ENCODE measurements at regions of chr10 and their contacts with region 1.

Region 1: DNA sequence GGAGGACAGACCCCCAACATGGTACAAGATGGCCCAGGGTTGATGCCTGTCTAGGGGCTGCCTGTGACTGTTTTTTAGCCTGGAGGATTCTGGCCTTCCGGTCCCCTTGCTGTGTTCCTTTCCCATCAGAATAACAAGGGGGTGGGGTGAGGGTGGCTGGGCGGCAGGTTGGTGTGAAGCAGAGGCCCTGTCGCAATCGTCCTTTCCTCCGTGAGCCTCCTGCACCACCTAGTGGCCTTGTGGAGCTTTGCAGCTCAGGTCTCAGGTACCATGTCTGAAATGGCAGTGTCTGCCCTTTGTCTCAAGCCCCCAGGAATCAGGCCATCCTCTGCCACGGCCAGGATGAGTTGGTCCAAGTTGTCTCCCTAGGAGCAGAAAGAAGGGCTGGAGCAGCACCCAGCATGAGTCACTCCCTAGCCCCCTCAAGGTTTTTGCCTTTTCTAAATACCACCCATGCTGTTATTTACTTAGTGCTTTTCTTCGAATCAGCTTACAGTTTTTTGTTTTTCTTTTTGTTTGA is 24.2 kb downstream of the TACR2 start:
- DNase-seq: peak; percentile 90
- ATAC-seq: peak; percentile 96
- H3K4me3 Mint-ChIP-seq: no peak overlapping the region
- H3K27ac Mint-ChIP-seq: peak overlapping the region; percentile 74
- H3K4me1 Mint-ChIP-seq: peaks cover 15% of the 10 kb centered on the region
- H3K27me3 Mint-ChIP-seq: no peaks in the 10 kb centered on the region

Region 2: GRCh38 chr10:69232252-69232651 is 160.3 kb before region 1 on chr10:
- CTCF ChIA-PET with region 1: interaction called, 146 read pairs
- DNase-seq: no peak
- ATAC-seq: no peak
- H3K4me3 Mint-ChIP-seq: no peak overlapping the region
- H3K27ac Mint-ChIP-seq: peak overlapping the region; percentile 39
- H3K4me1 Mint-ChIP-seq: peaks cover 65% of the 10 kb centered on the region
- H3K27me3 Mint-ChIP-seq: no peaks in the 10 kb centered on the region

Region 3: GRCh38 chr10:69237528-69238159 is 154.9 kb before region 1 on chr10:
- CTCF ChIA-PET with region 1: interaction called, 146 read pairs
- DNase-seq: peak; percentile 92
- ATAC-seq: peak; percentile 99
- H3K4me3 Mint-ChIP-seq: no peak overlapping the region
- H3K27ac Mint-ChIP-seq: peak overlapping the region; percentile 20
- H3K4me1 Mint-ChIP-seq: peaks cover 48% of the 10 kb centered on the region
- H3K27me3 Mint-ChIP-seq: no peaks in the 10 kb centered on the region

Region 4: DNA sequence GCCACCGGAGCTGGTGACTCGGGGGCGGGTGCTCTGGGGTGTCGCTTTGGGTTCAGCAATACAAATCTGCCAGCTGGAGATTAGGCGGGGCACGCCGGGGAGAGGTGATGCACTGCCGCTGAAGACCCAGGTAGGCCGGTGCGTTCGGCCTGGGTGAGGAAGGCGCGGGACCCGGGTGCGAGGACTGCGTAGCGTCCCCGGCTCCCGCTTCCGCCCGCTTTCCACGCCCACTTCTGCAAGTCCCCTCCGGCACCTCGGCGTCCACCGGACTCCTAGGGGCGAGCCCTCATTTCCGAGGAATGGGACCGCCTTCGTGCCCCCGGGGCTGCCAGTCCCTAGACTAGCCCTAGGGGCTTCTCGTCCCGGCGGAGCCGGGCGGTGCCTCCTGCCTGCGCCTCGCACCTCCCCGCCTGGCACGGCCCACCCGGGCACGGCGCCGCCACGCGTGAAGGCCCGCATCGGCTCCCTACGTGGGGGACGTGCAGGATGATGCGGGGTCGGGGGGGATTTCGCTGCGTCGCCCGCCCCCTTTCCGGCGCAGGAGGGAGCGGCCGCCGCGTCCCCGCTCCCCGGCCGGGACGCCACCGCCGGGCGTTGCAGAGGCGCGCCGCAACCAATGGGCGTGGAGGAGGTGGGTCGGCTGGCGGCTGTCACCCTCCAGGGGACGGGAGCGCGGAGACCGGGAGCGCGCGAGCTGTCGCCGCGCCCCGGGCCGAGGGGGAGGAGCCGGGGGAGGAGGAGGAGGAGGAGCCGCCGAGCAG is 74.3 kb before region 1 on chr10:
- CTCF ChIA-PET with region 1: interaction called, 24 read pairs
- DNase-seq: peak; percentile 95
- ATAC-seq: peak; percentile 89
- H3K4me3 Mint-ChIP-seq: peak overlapping the region; percentile 97
- H3K27ac Mint-ChIP-seq: peak overlapping the region; percentile 93
- H3K4me1 Mint-ChIP-seq: peaks cover 48% of the 10 kb centered on the region
- H3K27me3 Mint-ChIP-seq: no peaks in the 10 kb centered on the region

Region 5: GRCh38 chr10:69403519-69403918 is 11.0 kb after region 1 on chr10:
- CTCF ChIA-PET with region 1: interaction called, 24 read pairs
- DNase-seq: no peak
- ATAC-seq: no peak
- H3K4me3 Mint-ChIP-seq: no peak overlapping the region
- H3K27ac Mint-ChIP-seq: no peak overlapping the region
- H3K4me1 Mint-ChIP-seq: peaks cover 9% of the 10 kb centered on the region
- H3K27me3 Mint-ChIP-seq: no peaks in the 10 kb centered on the region

Region 6: GRCh38 chr10:69498711-69499476 is 106.4 kb after region 1 on chr10:
- CTCF ChIA-PET with region 1: no interaction called
- DNase-seq: no peak
- ATAC-seq: no peak
- H3K4me3 Mint-ChIP-seq: no peak overlapping the region
- H3K27ac Mint-ChIP-seq: no peak overlapping the region
- H3K4me1 Mint-ChIP-seq: peaks cover 3% of the 10 kb centered on the region
- H3K27me3 Mint-ChIP-seq: no peaks in the 10 kb centered on the region